Calu3 (cell line): ENCODE measurements at regions of chr14 and their contacts with region 1.

Region 1: GRCh38 chr14:84312551-84312950 is 1217.4 kb upstream of the FLRT2 start:
- DNase-seq: no peak
- H3K4me3 Mint-ChIP-seq: no peak overlapping the region
- H3K27ac Mint-ChIP-seq: no peak overlapping the region
- H3K4me1 Mint-ChIP-seq: no peaks in the 10 kb centered on the region
- H3K27me3 Mint-ChIP-seq: no peaks in the 10 kb centered on the region
- CTCF ChIP-seq: no peak

Region 2: DNA sequence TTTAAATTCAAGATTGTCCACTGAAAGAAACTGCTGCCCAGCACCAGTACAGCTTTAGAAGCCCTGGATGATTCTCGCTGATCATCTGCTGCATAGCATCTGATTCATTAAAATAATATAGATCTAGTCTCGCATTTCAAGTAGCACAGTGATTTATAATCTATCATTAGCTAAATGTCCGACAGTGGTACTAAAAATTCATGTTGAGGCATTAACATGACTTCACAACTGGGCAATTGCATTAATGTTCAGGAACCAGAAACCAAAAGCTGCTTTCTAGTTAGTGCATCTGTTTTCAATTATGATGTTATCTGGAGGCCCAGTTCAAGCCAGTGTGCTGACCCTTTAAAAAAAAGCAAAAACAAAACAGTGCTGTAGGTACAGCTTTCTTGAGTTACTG is 791.7 kb before region 1 on chr14:
- CTCF ChIA-PET with region 1: no interaction called
- intact Hi-C with region 1: no loop called
- DNase-seq: no peak
- H3K4me3 Mint-ChIP-seq: no peak overlapping the region
- H3K27ac Mint-ChIP-seq: no peak overlapping the region
- H3K4me1 Mint-ChIP-seq: no peaks in the 10 kb centered on the region
- H3K27me3 Mint-ChIP-seq: no peaks in the 10 kb centered on the region
- CTCF ChIP-seq: no peak

Region 3: GRCh38 chr14:84272290-84272721 is 40.2 kb before region 1 on chr14:
- CTCF ChIA-PET with region 1: no interaction called
- intact Hi-C with region 1: loop called (anchors 2 kb)
- DNase-seq: no peak
- H3K4me3 Mint-ChIP-seq: no peak overlapping the region
- H3K27ac Mint-ChIP-seq: no peak overlapping the region
- H3K4me1 Mint-ChIP-seq: no peaks in the 10 kb centered on the region
- H3K27me3 Mint-ChIP-seq: no peaks in the 10 kb centered on the region
- CTCF ChIP-seq: no peak